Aorta (tissue), 5 donors: ENCODE measurements at regions of chr10 and their contacts with region 1.

Region 1: GRCh38 chr10:93420091-93420490 is 62.0 kb downstream of the MYOF start:
- DNase-seq: no peak
- ATAC-seq: peak; percentile 71
- H3K4me3 ChIP-seq: no peak overlapping the region
- H3K27ac ChIP-seq: peak overlapping the region in 1 of 2 donors; percentile 78
- H3K4me1 ChIP-seq: peaks cover 2 to 3% of the 10 kb centered on the region in 2 donors
- H3K27me3 ChIP-seq: no peaks in the 10 kb centered on the region

Region 2: DNA sequence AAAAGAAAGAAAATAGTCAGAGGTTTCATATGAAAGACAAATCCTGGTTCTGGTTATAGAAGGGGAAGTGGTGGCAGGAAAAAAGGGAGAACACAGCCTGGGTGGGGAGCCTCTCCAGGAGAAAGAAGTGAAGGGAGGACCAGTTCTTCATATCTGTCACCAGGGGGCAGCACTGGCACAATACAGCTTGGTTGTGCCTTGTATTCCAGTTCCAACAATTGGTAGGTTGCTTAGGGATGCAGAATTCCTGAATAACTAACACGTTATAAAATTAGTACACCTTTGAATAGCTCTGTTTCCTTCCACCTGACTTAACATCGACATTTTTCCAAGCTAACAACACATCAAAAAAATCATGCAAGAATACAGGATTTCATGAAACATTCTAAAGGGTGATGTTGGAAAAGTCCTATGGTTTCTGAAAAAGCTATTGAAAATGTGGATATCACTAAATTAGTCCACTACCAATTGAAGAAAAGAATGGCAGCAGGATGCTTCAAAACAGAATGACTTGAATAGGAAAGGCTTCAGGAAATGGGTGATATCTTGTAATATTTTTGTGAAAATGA is 293.5 kb before region 1 on chr10:
- intact Hi-C with region 1: no loop called
- DNase-seq: no peak
- ATAC-seq: no peak
- H3K4me3 ChIP-seq: no peak overlapping the region
- H3K27ac ChIP-seq: no peak overlapping the region
- H3K4me1 ChIP-seq: no peaks in the 10 kb centered on the region
- H3K27me3 ChIP-seq: no peaks in the 10 kb centered on the region

Region 3: GRCh38 chr10:93383562-93383981 is 36.5 kb before region 1 on chr10:
- intact Hi-C with region 1: loop called (anchors 2 to 5 kb)
- DNase-seq: no peak
- ATAC-seq: peak; percentile 58
- H3K4me3 ChIP-seq: no peak overlapping the region
- H3K27ac ChIP-seq: peak overlapping the region; percentile 51 to 96
- H3K4me1 ChIP-seq: peaks cover 7 to 9% of the 10 kb centered on the region in 2 donors
- H3K27me3 ChIP-seq: no peaks in the 10 kb centered on the region

Region 4: DNA sequence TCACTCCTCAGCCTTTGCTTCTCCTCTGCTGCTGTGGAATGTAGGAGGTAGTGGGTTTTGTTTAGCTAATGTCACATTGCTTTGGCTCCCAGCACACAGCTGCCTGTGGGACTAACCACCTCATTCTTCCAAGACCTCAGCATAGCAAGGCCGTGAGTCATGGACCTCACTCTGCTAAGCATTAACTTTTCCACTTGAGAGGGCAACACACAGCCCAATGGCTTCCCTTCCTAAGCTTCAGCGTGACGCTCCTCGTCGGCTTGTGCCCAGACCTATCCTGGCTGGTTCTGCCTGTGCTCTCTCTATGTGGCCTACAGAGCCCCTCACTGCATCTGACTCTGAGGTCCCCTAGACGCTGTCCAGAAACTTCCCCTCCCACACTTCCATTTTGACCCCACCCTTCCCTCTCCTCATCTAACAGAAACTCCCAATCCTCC is 38.7 kb after region 1 on chr10:
- intact Hi-C with region 1: no loop called
- DNase-seq: peak; percentile 91 to 92
- ATAC-seq: peak; percentile 92
- H3K4me3 ChIP-seq: no peak overlapping the region
- H3K27ac ChIP-seq: peak overlapping the region; percentile 87 to 96
- H3K4me1 ChIP-seq: peaks cover 0 to 6% of the 10 kb centered on the region in 2 donors
- H3K27me3 ChIP-seq: no peaks in the 10 kb centered on the region

Region 5: GRCh38 chr10:93573051-93573909 is 153.2 kb after region 1 on chr10:
- intact Hi-C with region 1: no loop called
- DNase-seq: peak in 1 of 2 donors; percentile 80
- ATAC-seq: no peak
- H3K4me3 ChIP-seq: no peak overlapping the region
- H3K27ac ChIP-seq: no peak overlapping the region
- H3K4me1 ChIP-seq: no peaks in the 10 kb centered on the region
- H3K27me3 ChIP-seq: no peaks in the 10 kb centered on the region